ENCODE measurements at regions of chr11 and their contacts with region 1.

Region 1: GRCh38 chr11:78659326-78660270 is 84.9 kb upstream of the NARS2 start:
- DNase-seq: no peak
- H3K4me3 ChIP-seq: no peak overlapping the region
- H3K27ac ChIP-seq: no peak overlapping the region
- H3K4me1 ChIP-seq: no peaks in the 10 kb centered on the region
- H3K27me3 ChIP-seq: no peaks in the 10 kb centered on the region
- CTCF ChIP-seq: no peak
- EP300 ChIP-seq: no peak
- POLR2A ChIP-seq: no peak

Region 2: DNA sequence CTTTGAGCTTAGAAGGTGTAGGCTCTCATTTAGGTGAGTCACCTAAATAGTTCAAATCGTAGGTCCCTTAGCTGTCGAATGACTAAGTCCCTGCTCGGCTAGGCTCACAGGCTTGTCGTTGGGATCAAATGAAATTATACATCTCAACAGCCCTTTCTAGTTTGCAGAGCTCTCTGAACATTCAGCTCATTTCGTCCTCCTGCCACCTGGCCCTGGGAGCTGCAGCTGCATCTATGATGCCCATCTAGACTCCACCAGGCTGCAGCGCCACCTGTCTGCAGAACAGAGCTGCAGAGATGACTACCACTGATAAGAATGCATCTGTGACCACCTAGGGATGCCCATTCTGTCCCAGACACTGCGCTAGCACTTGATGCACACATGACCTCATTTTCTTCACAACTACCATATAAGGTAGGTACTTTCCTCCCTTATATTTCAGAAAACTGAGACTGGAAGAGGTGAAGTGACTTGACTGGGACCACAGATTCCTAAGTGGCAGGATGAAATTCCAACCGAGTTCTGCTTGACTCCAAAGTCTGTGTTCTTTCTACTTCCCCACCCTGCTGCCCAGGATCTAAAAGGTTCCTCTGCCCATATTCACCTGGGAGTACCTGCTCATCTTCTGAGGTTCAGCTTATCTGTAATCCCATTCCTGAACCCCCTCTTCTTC is 56.2 kb after region 1 on chr11:
- in situ Hi-C with region 1: loop called in 1 of 4 experiments (anchors 10 kb)
- intact Hi-C with region 1: no loop called
- DNase-seq: peak; percentile 66
- H3K4me3 ChIP-seq: no peak overlapping the region
- H3K27ac ChIP-seq: no peak overlapping the region
- H3K4me1 ChIP-seq: no peaks in the 10 kb centered on the region
- H3K27me3 ChIP-seq: no peaks in the 10 kb centered on the region
- CTCF ChIP-seq: peak; percentile 47 to 70 (median 61)
- EP300 ChIP-seq: no peak
- POLR2A ChIP-seq: no peak

Region 3: DNA sequence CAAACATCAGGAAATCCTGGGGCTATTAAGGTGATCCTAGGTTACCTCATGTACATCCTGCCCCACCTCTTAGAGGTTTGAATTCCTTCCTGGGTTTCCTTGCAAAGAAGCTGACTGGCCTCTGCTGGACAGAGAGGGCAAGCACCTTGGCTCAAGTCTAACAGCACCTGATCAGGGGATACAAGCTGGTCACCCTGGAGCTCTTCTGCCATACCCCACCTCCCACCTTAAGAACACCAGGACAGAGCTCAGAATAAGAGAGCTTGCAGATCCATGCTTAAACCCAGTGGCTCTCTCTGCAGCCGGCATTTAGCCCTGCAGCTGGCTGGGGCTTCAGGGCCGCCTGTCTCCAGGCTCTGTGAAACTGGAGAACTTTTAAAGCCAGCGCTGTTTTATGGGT is 301.6 kb after region 1 on chr11:
- in situ Hi-C with region 1: loop called in 1 of 4 experiments (anchors 10 kb)
- intact Hi-C with region 1: no loop called
- DNase-seq: peak; percentile 31
- H3K4me3 ChIP-seq: no peak overlapping the region
- H3K27ac ChIP-seq: no peak overlapping the region
- H3K4me1 ChIP-seq: peaks cover 0 to 7% (median 2%) of the 10 kb centered on the region in 4 donors
- H3K27me3 ChIP-seq: peaks cover 28% of the 10 kb centered on the region
- CTCF ChIP-seq: peak; percentile 27 to 68 (median 50)
- EP300 ChIP-seq: no peak
- POLR2A ChIP-seq: no peak

Region 4: DNA sequence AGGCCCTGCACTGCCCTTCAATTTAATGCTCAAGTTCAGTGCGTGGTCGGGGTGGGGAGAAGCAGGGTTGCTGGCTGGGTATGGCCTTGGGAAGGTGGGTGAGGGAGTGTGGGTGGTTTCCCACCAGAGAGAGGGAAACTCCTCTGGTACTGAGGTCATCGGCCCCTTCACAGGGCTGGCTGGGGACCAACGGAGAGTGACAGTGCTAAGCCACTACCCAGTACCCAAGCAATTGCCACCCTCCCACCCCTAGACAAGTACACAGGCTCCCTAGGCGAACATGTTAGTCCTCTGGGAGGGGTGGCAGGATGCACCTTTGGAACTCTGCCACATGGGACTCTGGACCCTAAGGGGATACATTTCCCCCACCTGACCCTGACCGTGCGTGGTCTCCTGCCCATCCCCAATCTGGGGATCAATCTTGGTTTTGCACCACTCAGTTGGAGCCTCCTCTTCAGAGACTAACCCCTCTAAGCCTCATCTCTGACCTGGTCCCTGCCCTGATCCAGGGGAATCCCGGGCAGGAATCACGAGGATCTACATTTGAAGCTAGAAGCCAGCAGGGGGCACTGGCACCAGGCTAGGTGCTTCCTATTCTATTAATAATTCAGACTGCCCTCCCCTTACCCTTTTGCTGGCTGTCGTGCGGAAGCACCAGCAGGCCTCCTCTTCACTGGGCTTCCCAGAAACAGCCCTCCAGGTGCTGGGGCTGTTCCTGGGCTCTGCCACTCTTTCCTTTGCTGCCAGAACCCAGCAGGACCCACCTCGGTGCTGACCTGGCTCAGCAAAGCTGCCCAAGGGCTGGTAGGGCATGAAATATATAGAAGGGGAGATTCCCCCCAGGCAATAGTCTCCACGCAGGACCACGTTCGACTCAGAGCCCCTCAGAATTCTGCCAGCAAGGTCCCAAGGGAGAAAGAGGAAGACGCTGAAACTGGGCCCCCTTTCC is 403.5 kb after region 1 on chr11:
- in situ Hi-C with region 1: loop called in 2 of 4 experiments (anchors 25 kb)
- intact Hi-C with region 1: no loop called
- DNase-seq: no peak
- H3K4me3 ChIP-seq: no peak overlapping the region
- H3K27ac ChIP-seq: no peak overlapping the region
- H3K4me1 ChIP-seq: no peaks in the 10 kb centered on the region
- H3K27me3 ChIP-seq: no peaks in the 10 kb centered on the region
- CTCF ChIP-seq: peak in 1 of 5 experiments; percentile 11
- EP300 ChIP-seq: no peak
- POLR2A ChIP-seq: no peak

Region 5: GRCh38 chr11:79076526-79077115 is 417.0 kb after region 1 on chr11:
- in situ Hi-C with region 1: loop called (anchors 25 kb)
- intact Hi-C with region 1: no loop called
- DNase-seq: peak; percentile 47
- H3K4me3 ChIP-seq: no peak overlapping the region
- H3K27ac ChIP-seq: no peak overlapping the region
- H3K4me1 ChIP-seq: peaks cover 0 to 6% (median 2%) of the 10 kb centered on the region in 4 donors
- H3K27me3 ChIP-seq: no peaks in the 10 kb centered on the region
- CTCF ChIP-seq: peak; percentile 53 to 64 (median 61)
- EP300 ChIP-seq: no peak
- POLR2A ChIP-seq: no peak

Region 6: DNA sequence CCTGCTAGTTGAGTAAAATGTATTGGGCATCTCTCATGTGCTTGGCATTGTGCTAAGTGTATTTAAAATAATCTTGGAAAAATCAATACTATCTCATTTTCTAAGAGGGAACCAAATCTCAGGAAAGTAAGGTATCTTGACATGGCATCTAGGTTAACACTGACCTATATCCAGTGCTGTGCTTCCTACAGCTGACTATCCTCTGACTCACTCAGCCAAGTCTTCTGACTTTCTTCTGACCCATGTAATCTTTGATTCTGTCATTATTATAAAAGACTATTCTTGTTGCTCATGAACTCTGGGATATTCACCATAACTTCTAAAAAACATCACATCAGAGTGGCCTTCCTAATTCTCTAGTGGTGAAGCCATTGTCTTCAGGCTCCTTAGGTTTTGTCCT is 1085.3 kb after region 1 on chr11:
- in situ Hi-C with region 1: no loop called
- intact Hi-C with region 1: loop called (anchors 10 kb)
- DNase-seq: no peak
- H3K4me3 ChIP-seq: no peak overlapping the region
- H3K27ac ChIP-seq: no peak overlapping the region
- H3K4me1 ChIP-seq: no peaks in the 10 kb centered on the region
- H3K27me3 ChIP-seq: no peaks in the 10 kb centered on the region
- CTCF ChIP-seq: no peak
- EP300 ChIP-seq: no peak
- POLR2A ChIP-seq: no peak

Measured in transverse colon (tissue), 4 donors.